ENCODE measurements at regions of chr14 and their contacts with region 1.

Region 1: GRCh38 chr14:78985668-78986381 is 815.7 kb downstream of the NRXN3 start:
- DNase-seq: peak; percentile 70
- H3K4me3 ChIP-seq: peak overlapping the region in 1 of 4 experiments; percentile 35; a peak in 2 of 8 replicates
- H3K27ac ChIP-seq: no peak overlapping the region
- H3K4me1 ChIP-seq: peaks cover 2 to 19% (median 8%) of the 10 kb centered on the region in 4 experiments; a peak in 5 of 7 replicates
- H3K27me3 ChIP-seq: peaks cover 1 to 18% (median 10%) of the 10 kb centered on the region in 4 experiments
- CTCF ChIP-seq: no peak
- EP300 ChIP-seq: no peak; a peak in 1 of 3 replicates
- POLR2A ChIP-seq: no peak
- RAD21 ChIP-seq: no peak

Region 2: DNA sequence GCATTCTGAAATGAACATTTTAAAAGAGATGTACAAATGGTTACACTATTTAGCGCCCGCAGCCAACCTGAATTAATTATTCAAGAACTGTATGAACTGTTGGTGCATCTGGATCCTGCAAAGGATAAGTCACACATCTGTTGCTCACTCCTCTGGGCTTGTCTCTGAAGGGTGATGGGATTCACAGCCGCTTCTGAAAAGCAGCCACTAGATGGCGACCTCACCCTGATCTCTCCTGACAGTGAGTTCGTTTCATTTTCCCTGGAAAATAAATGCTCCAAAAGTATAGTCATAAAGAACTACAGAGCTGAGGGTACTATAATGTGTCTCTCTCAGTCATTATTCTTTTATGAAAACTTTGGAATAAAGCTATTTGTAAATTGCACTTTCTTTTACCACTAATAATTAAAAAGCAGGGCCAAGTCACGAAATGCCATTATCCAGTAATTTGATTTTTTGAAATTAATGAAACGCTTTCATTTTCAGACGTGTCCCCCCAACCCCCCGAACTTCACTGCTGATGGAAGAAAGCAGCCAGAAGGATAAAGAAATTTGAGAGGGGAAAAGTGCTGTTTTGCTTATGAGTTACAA is 26.1 kb before region 1 on chr14:
- CTCF ChIA-PET with region 1: interaction called, 13 read pairs
- POLR2A ChIA-PET with region 1: no interaction called
- DNase-seq: peak; percentile 34 to 80
- H3K4me3 ChIP-seq: no peak overlapping the region
- H3K27ac ChIP-seq: no peak overlapping the region
- H3K4me1 ChIP-seq: no peaks in the 10 kb centered on the region
- H3K27me3 ChIP-seq: no peaks in the 10 kb centered on the region
- CTCF ChIP-seq: peak; percentile 66 to 85 (median 69)
- EP300 ChIP-seq: no peak
- POLR2A ChIP-seq: no peak
- RAD21 ChIP-seq: peak; percentile 85 to 86

Region 3: GRCh38 chr14:78967110-78967809 is 18.6 kb before region 1 on chr14:
- CTCF ChIA-PET with region 1: interaction called, 10 read pairs
- POLR2A ChIA-PET with region 1: no interaction called
- DNase-seq: no peak
- H3K4me3 ChIP-seq: no peak overlapping the region
- H3K27ac ChIP-seq: no peak overlapping the region
- H3K4me1 ChIP-seq: peaks cover 0 to 4% (median 0%) of the 10 kb centered on the region in 4 experiments; a peak in 1 of 7 replicates
- H3K27me3 ChIP-seq: no peaks in the 10 kb centered on the region
- CTCF ChIP-seq: no peak
- EP300 ChIP-seq: no peak
- POLR2A ChIP-seq: no peak
- RAD21 ChIP-seq: no peak

Measured in H1 (cell line).